IMR-90 (cell line): ENCODE measurements at regions of chr1 and their contacts with region 1.

Region 1: DNA sequence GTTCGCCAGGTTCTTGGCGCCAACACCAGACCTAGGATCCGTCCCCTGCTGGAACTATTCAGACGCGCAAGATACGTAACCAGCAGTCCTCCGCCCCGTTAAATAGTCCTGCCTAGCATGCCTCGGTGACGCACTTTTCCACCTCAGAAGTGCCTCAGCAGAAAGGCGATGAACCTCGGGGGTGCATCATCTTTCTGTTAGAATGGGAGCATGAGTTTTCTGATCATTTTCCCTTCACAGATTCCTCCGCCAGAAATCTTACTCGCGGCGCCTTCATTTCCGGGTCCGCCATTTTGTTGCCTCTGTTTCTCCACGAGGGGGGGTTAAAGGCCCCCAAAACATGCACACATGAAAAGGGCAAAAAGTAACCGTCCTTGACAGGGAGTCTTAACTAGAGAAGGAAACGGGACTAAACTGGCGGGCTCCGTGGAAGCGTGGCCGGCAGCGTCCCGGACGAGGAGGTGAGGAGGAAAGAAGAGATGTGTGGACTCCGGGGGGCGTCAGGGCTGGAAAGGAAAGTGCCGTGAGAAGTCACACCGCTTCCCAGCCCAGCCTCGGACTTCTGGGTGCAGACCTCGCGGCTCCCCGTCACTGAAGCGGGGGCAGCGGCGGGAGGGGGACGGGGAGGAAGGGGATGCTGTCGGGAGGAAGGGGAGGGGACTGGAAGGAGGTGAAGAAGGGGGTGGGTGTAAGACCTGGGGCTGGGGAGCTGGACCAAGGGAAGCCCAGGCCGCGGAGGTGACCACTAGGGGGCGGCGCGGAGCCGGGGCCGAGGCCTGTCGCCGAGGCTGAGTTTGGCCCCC is at the start of gene GABPB2:
- DNase-seq: peak; percentile 99
- ATAC-seq: peak; percentile 94
- H3K4me3 ChIP-seq: peak within 1 kb of the TSS; percentile 73
- H3K27ac ChIP-seq: peak within 1 kb of the TSS; percentile 88
- H3K4me1 ChIP-seq: no peaks in the 10 kb centered on the region
- H3K27me3 ChIP-seq: no peaks in the 10 kb centered on the region
- CTCF ChIP-seq: peak; percentile 84
- POLR2A ChIP-seq: peak; percentile 91
- RAD21 ChIP-seq: peak; percentile 47
- total RNA-seq, gene GABPB2: 11.9 and 12.9 TPM in 2 replicates

Region 2: GRCh38 chr1:151146412-151147140 is 75.9 kb after region 1 on chr1 and contains the start of gene SEMA6C:
- CTCF ChIA-PET with region 1: no interaction called
- POLR2A ChIA-PET with region 1: no interaction called
- dilution Hi-C with region 1: no loop called
- in situ Hi-C with region 1: no loop called
- intact Hi-C with region 1: loop called (anchors 5 kb)
- DNase-seq: peak; percentile 86
- ATAC-seq: peak; percentile 100
- H3K4me3 ChIP-seq: peak within 1 kb of the TSS; percentile 77
- H3K27ac ChIP-seq: peak within 1 kb of the TSS; percentile 19; the same call in 1 of the 2 replicates
- H3K4me1 ChIP-seq: peaks cover 5% of the 10 kb centered on the region
- H3K27me3 ChIP-seq: peaks cover 2% of the 10 kb centered on the region; the same call in 1 of the 2 replicates
- CTCF ChIP-seq: no peak
- POLR2A ChIP-seq: peak; percentile 68; the same call in 1 of the 2 replicates
- RAD21 ChIP-seq: no peak
- total RNA-seq, gene SEMA6C: 0.36 and 0.56 TPM in 2 replicates